IMR-90 (cell line): ENCODE measurements at regions of chrX and their contacts with region 1.

Region 1: GRCh38 chrX:154082396-154083125 is 15.0 kb downstream of the MECP2 start:
- DNase-seq: peak; percentile 76
- ATAC-seq: peak; percentile 87
- H3K4me3 ChIP-seq: no peak overlapping the region
- H3K27ac ChIP-seq: no peak overlapping the region
- H3K4me1 ChIP-seq: peaks cover 9% of the 10 kb centered on the region
- H3K27me3 ChIP-seq: no peaks in the 10 kb centered on the region
- CTCF ChIP-seq: no peak
- POLR2A ChIP-seq: no peak
- RAD21 ChIP-seq: no peak

Region 2: DNA sequence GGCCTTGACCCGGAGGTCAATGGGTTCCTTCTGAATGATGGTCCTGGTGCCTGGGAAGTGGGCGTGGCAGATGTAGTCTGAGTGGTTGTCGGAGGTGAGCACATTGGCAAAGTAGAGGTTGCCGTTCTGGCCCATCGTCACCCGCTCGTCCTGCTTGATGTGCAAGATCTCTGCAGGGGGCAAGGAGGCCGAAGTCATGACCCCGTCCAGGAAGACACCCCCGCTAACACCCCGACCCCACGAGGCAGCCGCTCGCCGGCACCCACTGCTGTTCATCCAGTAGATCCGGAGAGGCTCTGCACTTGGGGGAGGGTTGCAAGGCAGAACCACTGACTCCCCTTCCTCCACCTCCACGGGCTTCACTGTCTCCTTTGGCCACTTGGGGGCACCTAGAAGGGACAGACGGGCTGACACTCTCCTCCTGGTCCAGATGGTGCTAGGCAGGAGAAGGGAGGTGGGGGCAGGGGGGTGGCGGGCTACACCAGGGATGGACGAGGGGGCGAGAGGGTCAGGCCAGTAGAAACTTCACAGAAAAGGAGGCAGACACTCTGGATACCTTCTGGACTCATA is 211.7 kb before region 1 on chrX:
- CTCF ChIA-PET with region 1: no interaction called
- POLR2A ChIA-PET with region 1: no interaction called
- dilution Hi-C with region 1: no loop called
- in situ Hi-C with region 1: no loop called
- intact Hi-C with region 1: no loop called
- DNase-seq: no peak
- ATAC-seq: no peak
- H3K4me3 ChIP-seq: no peak overlapping the region
- H3K27ac ChIP-seq: no peak overlapping the region
- H3K4me1 ChIP-seq: no peaks in the 10 kb centered on the region
- H3K27me3 ChIP-seq: peaks cover 18% of the 10 kb centered on the region
- CTCF ChIP-seq: no peak
- POLR2A ChIP-seq: no peak
- RAD21 ChIP-seq: no peak

Region 3: GRCh38 chrX:154097597-154098541 is 15.3 kb after region 1 on chrX and contains the start of gene MECP2:
- CTCF ChIA-PET with region 1: no interaction called
- POLR2A ChIA-PET with region 1: no interaction called
- dilution Hi-C with region 1: no loop called
- in situ Hi-C with region 1: no loop called
- intact Hi-C with region 1: loop called (anchors 2 kb)
- DNase-seq: peak; percentile 88
- ATAC-seq: peak; percentile 95
- H3K4me3 ChIP-seq: peak within 1 kb of the TSS; percentile 88
- H3K27ac ChIP-seq: peak within 1 kb of the TSS; percentile 93
- H3K4me1 ChIP-seq: peaks cover 5% of the 10 kb centered on the region
- H3K27me3 ChIP-seq: peaks cover 2% of the 10 kb centered on the region; the same call in 1 of the 2 replicates
- CTCF ChIP-seq: no peak
- POLR2A ChIP-seq: 0 out of 2 replicates have a peak, but pooled peaks have one; percentile 38
- RAD21 ChIP-seq: no peak
- total RNA-seq, gene MECP2: 8.4 and 10.8 TPM in 2 replicates